SK-N-SH (cell line): ENCODE measurements at regions of chr7 and their contacts with region 1.

Region 1: GRCh38 chr7:105795390-105795729 is 81.0 kb downstream of the ATXN7L1 start:
- DNase-seq: no peak
- H3K4me3 ChIP-seq: no peak overlapping the region
- H3K27ac ChIP-seq: peak overlapping the region; percentile 29 to 42; a peak in 2 of 4 replicates
- H3K4me1 ChIP-seq: peaks cover 25 to 37% of the 10 kb centered on the region in 2 experiments
- H3K27me3 ChIP-seq: no peaks in the 10 kb centered on the region
- CTCF ChIP-seq: no peak
- EP300 ChIP-seq: no peak
- RAD21 ChIP-seq: no peak

Region 2: DNA sequence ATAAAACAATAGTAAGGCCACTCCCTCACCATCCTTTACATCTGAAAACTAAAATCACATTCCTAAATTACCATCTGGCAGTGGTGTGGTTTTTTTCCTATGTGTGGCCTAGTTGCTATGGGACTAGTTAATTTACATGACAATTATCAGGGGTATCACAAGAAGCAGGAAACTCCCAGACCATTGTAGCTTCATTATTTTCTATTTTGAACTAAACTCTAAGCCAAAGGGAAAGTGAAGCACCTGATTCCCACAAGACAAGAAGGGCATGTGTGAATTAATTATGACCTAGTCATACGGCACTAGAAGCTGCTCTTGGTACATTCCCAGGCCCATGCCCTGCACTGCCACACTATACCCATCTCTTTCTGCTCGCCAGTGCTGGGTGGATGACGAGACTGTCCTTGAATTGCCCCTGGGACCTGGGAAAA is 22.3 kb before region 1 on chr7:
- CTCF ChIA-PET with region 1: no interaction called
- POLR2A ChIA-PET with region 1: no interaction called
- DNase-seq: no peak
- H3K4me3 ChIP-seq: no peak overlapping the region
- H3K27ac ChIP-seq: no peak overlapping the region
- H3K4me1 ChIP-seq: peaks cover 22 to 35% of the 10 kb centered on the region in 2 experiments
- H3K27me3 ChIP-seq: no peaks in the 10 kb centered on the region
- CTCF ChIP-seq: no peak
- EP300 ChIP-seq: no peak
- RAD21 ChIP-seq: no peak

Region 3: GRCh38 chr7:105808703-105809590 is 13.6 kb after region 1 on chr7:
- CTCF ChIA-PET with region 1: interaction called, 25 read pairs
- POLR2A ChIA-PET with region 1: no interaction called
- DNase-seq: no peak
- H3K4me3 ChIP-seq: no peak overlapping the region
- H3K27ac ChIP-seq: no peak overlapping the region
- H3K4me1 ChIP-seq: peaks cover 0 to 22% of the 10 kb centered on the region in 2 experiments; a peak in 3 of 4 replicates
- H3K27me3 ChIP-seq: no peaks in the 10 kb centered on the region
- CTCF ChIP-seq: no peak
- EP300 ChIP-seq: no peak
- RAD21 ChIP-seq: no peak

Region 4: GRCh38 chr7:105996860-105997737 is 201.7 kb after region 1 on chr7:
- CTCF ChIA-PET with region 1: no interaction called
- POLR2A ChIA-PET with region 1: no interaction called
- DNase-seq: no peak
- H3K4me3 ChIP-seq: no peak overlapping the region
- H3K27ac ChIP-seq: no peak overlapping the region
- H3K4me1 ChIP-seq: peaks cover 0 to 9% of the 10 kb centered on the region in 2 experiments; a peak in 1 of 4 replicates
- H3K27me3 ChIP-seq: no peaks in the 10 kb centered on the region; the same call in 1 of the 2 replicates
- CTCF ChIP-seq: no peak
- EP300 ChIP-seq: no peak
- RAD21 ChIP-seq: no peak